Mammary epithelial cell (primary cell): ENCODE measurements at regions of chr13 and their contacts with region 1.

Region 1: DNA sequence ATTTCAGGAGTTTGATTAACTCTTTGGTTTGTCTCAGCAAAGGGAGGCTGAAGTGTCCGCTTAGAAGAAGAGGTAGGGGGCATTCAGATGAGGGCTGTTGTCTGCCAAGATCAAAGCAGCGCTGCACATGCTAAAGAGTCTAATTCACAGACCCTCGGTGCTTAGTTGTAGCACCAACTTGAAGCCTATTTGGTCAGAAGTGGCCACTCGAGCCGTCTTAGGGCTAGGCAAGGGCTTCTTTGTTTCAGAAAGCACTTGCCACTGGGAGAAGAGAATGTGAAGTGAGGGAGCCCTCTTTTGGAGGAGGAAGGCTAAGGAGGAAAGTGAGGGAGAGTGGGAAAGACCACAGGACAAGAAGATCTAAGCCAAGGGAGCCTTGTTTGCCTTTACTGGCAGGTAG is 313.4 kb upstream of the TMTC4 start:
- DNase-seq: no peak
- H3K4me3 ChIP-seq: no peak overlapping the region
- H3K27ac ChIP-seq: no peak overlapping the region
- H3K4me1 ChIP-seq: no peaks in the 10 kb centered on the region
- H3K27me3 ChIP-seq: no peaks in the 10 kb centered on the region
- CTCF ChIP-seq: peak in 1 of 2 donors; percentile 37

Region 2: GRCh38 chr13:100608906-100609305 is 379.0 kb before region 1 on chr13:
- CTCF ChIA-PET with region 1: no interaction called
- dilution Hi-C with region 1: no loop called
- in situ Hi-C with region 1: no loop called
- intact Hi-C with region 1: no loop called
- DNase-seq: no peak
- H3K4me3 ChIP-seq: no peak overlapping the region
- H3K27ac ChIP-seq: no peak overlapping the region
- H3K4me1 ChIP-seq: no peaks in the 10 kb centered on the region
- H3K27me3 ChIP-seq: peaks cover 15% of the 10 kb centered on the region
- CTCF ChIP-seq: no peak

Region 3: GRCh38 chr13:100738176-100738855 is 249.6 kb before region 1 on chr13:
- CTCF ChIA-PET with region 1: no interaction called
- dilution Hi-C with region 1: no loop called
- in situ Hi-C with region 1: no loop called
- intact Hi-C with region 1: loop called (anchors 5 kb)
- DNase-seq: no peak
- H3K4me3 ChIP-seq: no peak overlapping the region
- H3K27ac ChIP-seq: no peak overlapping the region
- H3K4me1 ChIP-seq: no peaks in the 10 kb centered on the region
- H3K27me3 ChIP-seq: no peaks in the 10 kb centered on the region
- CTCF ChIP-seq: no peak

Region 4: DNA sequence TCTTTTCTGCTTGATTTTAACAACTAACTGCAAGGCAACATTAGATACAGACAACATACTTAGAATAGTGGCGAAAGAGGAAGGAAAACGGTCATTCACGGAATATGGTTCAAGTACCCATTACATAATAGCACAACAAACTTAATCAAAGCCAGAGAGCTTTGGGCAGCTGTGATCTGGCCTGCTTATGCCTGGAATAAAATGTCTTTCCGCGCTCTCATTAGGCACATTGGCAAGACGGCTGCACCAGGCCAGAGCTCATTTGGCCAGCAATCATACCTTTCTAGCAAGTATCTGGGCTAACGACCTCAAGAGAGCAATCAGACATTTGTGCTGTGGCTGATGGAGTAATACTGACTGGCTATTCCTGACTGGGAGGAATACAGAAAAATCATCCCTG is 315.6 kb after region 1 on chr13:
- CTCF ChIA-PET with region 1: no interaction called
- dilution Hi-C with region 1: no loop called
- in situ Hi-C with region 1: no loop called
- intact Hi-C with region 1: no loop called
- DNase-seq: no peak
- H3K4me3 ChIP-seq: no peak overlapping the region
- H3K27ac ChIP-seq: no peak overlapping the region
- H3K4me1 ChIP-seq: peaks cover 9% of the 10 kb centered on the region
- H3K27me3 ChIP-seq: no peaks in the 10 kb centered on the region
- CTCF ChIP-seq: no peak